ENCODE measurements at regions of chr12 and their contacts with region 1.

Region 1: GRCh38 chr12:102119674-102120563 is at the starts of genes NUP37 and PARPBP:
- DNase-seq: peak; percentile 95
- H3K4me3 Mint-ChIP-seq: peak within 1 kb of the TSS; percentile 90
- H3K27ac Mint-ChIP-seq: peak within 1 kb of the TSS; percentile 80
- H3K4me1 Mint-ChIP-seq: peaks cover 19% of the 10 kb centered on the region
- H3K27me3 Mint-ChIP-seq: no peaks in the 10 kb centered on the region
- total RNA-seq, gene NUP37: 85.3 to 88.0 TPM
- total RNA-seq, gene PARPBP: 28.8 to 29.5 TPM

Region 2: DNA sequence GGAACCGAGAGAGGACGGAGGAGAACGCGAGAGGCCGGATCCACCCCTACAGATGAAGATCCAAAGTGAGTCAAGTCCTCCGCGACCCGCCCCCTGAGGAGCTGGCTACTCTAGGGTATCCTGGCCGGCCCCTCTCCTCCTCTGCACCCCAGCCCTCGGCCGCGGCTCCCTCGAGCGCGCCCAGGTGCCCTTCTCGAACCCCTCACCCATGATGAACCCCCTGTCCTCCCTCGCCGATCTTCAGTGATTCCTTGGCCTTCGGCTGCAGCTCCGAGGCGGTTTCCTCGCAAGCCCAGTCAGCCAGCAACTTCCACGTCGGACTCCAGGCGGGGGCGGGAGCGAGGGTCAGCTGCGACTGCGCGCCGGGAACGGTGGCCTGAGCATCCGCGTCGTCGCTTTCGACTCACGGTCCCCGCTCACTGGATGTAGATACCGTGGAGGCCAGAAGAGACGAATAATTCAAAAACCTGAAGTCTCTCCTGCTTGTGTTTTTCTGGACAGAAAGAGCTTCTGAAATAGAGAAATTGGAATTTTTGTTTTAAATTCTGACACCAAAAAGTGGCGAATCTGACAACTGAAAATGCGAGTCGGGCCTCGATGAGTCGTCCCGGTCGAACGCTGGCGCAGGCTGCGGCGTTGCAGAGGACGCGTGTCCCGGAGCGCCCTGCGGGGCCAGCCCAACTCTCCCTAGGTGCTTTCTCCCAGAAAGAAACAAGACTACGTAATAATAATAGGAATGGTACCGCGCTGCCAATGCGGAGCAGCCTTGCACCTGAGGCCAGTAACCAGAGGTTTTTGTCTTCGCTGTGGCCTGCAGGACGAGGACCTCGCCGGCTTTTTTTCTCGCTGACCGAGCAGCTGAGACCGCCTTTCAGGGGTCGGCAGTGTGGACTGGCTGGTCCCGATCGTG is 712.2 kb before region 1 on chr12 and contains the start of gene ARL1:
- CTCF ChIA-PET with region 1: no interaction called
- intact Hi-C with region 1: loop called (anchors 10 kb)
- DNase-seq: peak; percentile 84
- H3K4me3 Mint-ChIP-seq: peak within 1 kb of the TSS; percentile 93
- H3K27ac Mint-ChIP-seq: peak within 1 kb of the TSS; percentile 90
- H3K4me1 Mint-ChIP-seq: peaks cover 19% of the 10 kb centered on the region
- H3K27me3 Mint-ChIP-seq: peaks cover 6% of the 10 kb centered on the region
- total RNA-seq, gene ARL1: 44.1 to 48.4 TPM

Region 3: DNA sequence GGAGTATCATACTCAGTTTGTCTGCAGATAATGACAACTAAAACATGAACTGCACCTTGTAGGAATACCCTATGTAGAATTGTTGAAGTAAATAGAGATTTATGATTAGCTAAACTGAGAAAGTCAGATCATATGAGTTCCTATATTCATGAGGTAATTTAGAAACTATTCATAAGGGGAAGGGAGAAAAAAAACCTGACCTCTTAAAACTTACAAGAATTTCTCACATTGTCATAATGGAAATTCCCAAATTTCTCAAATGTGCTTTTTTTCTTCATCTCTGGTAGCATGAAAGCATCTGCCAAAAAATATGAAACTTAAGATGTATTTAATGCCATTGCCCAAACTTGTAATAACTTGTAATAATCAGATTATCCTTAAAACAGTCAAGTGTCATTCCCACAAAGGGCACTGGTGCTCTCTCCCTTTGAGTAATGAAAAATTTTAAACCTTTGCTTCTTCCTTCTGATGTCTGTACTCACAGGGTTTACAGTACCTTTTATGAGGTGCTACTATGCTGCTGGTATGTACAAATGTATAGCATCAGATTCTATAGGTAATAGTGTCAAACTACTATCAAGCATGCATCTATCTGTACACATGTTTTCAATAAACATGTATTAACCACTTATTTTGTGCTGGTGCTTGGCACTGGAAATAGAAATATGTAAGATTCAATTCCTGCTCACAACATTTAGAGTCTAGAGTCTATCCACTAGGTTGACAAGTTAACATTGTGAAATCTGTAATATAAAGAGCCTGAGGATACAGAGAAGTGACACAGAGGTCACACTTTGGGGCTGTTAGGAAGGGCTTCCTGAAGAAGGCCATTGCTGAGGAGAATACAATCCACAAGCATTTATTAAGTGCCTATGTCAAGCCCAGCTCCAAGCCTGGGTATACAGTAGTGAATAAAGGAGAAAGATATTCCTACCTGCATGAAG is 260.0 kb before region 1 on chr12:
- CTCF ChIA-PET with region 1: no interaction called
- intact Hi-C with region 1: loop called (anchors 1 kb)
- DNase-seq: no peak
- H3K4me3 Mint-ChIP-seq: no peak overlapping the region
- H3K27ac Mint-ChIP-seq: peak overlapping the region; percentile 54
- H3K4me1 Mint-ChIP-seq: peaks cover 24% of the 10 kb centered on the region
- H3K27me3 Mint-ChIP-seq: peaks cover 2% of the 10 kb centered on the region

Region 4: GRCh38 chr12:101939856-101940265 is 180.1 kb before region 1 on chr12:
- CTCF ChIA-PET with region 1: no interaction called
- intact Hi-C with region 1: loop called (anchors 1 kb)
- DNase-seq: peak; percentile 73
- H3K4me3 Mint-ChIP-seq: no peak overlapping the region
- H3K27ac Mint-ChIP-seq: no peak overlapping the region
- H3K4me1 Mint-ChIP-seq: peaks cover 9% of the 10 kb centered on the region
- H3K27me3 Mint-ChIP-seq: peaks cover 18% of the 10 kb centered on the region

Region 5: GRCh38 chr12:102080842-102081241 is 39.1 kb before region 1 on chr12:
- CTCF ChIA-PET with region 1: no interaction called
- intact Hi-C with region 1: no loop called
- DNase-seq: no peak
- H3K4me3 Mint-ChIP-seq: no peak overlapping the region
- H3K27ac Mint-ChIP-seq: no peak overlapping the region
- H3K4me1 Mint-ChIP-seq: no peaks in the 10 kb centered on the region
- H3K27me3 Mint-ChIP-seq: no peaks in the 10 kb centered on the region

Region 6: DNA sequence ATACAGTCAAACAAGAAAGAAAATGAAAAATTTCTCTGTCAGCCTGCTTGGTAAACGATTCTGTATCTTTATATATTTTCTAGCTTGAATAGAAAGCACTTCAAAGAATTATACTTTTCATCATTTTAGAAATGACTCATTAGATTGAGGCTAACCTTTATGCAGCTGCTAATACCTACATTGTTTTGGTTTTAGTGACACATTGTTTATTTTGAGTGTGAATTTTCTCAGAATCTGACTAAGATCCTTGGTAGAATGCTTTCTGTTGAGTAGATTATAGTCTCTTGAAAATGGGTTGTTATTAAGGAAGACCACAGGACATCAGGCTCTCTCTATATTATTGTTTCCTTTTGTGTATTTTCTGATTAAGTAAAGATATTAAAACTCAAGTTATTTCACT is 77.9 kb after region 1 on chr12 and contains the start of gene PMCH:
- CTCF ChIA-PET with region 1: no interaction called
- intact Hi-C with region 1: loop called (anchors 2 kb)
- DNase-seq: no peak
- H3K4me3 Mint-ChIP-seq: no peak within 1 kb of the TSS
- H3K27ac Mint-ChIP-seq: no peak within 1 kb of the TSS
- H3K4me1 Mint-ChIP-seq: peaks cover 8% of the 10 kb centered on the region
- H3K27me3 Mint-ChIP-seq: no peaks in the 10 kb centered on the region
- total RNA-seq, gene PMCH: not detected

Region 7: GRCh38 chr12:102879144-102879763 is 759.3 kb after region 1 on chr12:
- CTCF ChIA-PET with region 1: no interaction called
- intact Hi-C with region 1: loop called (anchors 1 kb)
- DNase-seq: peak; percentile 51
- H3K4me3 Mint-ChIP-seq: no peak overlapping the region
- H3K27ac Mint-ChIP-seq: no peak overlapping the region
- H3K4me1 Mint-ChIP-seq: no peaks in the 10 kb centered on the region
- H3K27me3 Mint-ChIP-seq: peaks cover 13% of the 10 kb centered on the region